Sigmoid colon (tissue), 7 donors: ENCODE measurements at regions of chr19 and their contacts with region 1.

Region 1: DNA sequence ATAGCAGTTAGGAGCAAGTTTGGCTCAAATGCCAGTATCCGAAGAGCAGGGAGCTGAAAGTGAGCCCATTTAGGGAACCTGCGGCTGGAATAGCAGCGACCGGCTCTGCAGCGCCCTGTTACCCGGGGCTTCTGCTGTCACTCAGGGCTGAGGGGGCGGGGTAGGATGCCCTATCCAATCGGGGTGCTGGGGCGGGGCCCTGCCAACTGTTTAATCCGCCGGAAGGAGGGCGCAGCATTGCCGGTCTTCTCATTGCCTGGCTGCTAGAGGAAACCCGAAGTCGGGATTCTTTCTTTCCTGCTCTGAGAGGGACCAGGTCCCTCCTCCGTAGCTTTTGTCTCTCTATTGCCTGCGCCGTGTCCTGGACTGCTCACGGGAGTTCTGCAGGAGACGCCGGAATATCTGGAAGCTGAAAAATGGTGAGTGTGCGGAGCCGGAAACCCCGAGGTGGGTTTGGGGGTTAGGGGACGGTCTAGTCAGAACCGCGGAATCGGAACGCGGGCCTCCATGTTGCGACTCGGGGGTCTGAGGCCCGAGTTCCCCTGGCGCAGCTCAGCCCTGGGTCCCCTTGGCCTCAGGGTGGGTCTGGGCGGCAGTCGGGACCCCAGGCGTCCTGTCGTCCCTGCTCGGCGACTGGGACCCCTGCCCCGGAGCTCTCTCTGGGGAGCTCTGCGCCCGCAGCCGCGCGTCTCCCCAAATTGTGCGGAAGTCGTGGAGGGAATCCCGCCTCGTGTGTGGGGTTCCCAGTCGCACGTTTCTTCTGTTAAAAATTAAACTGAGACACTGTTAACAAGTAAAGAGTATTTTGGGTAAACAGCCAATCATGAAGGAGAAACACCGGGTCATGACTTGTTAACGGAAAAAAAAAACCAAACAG is 22.8 kb downstream of the ZNF763 start:
- DNase-seq: peak; percentile 98
- H3K4me3 ChIP-seq: peak overlapping the region; percentile 66 to 85 (median 76)
- H3K27ac ChIP-seq: peak overlapping the region; percentile 92 to 95 (median 94)
- H3K4me1 ChIP-seq: peaks cover 0 to 15% (median 3%) of the 10 kb centered on the region in 4 donors
- H3K27me3 ChIP-seq: no peaks in the 10 kb centered on the region
- CTCF ChIP-seq: no peak
- EP300 ChIP-seq: no peak
- POLR2A ChIP-seq: peak; percentile 91 to 94

Region 2: DNA sequence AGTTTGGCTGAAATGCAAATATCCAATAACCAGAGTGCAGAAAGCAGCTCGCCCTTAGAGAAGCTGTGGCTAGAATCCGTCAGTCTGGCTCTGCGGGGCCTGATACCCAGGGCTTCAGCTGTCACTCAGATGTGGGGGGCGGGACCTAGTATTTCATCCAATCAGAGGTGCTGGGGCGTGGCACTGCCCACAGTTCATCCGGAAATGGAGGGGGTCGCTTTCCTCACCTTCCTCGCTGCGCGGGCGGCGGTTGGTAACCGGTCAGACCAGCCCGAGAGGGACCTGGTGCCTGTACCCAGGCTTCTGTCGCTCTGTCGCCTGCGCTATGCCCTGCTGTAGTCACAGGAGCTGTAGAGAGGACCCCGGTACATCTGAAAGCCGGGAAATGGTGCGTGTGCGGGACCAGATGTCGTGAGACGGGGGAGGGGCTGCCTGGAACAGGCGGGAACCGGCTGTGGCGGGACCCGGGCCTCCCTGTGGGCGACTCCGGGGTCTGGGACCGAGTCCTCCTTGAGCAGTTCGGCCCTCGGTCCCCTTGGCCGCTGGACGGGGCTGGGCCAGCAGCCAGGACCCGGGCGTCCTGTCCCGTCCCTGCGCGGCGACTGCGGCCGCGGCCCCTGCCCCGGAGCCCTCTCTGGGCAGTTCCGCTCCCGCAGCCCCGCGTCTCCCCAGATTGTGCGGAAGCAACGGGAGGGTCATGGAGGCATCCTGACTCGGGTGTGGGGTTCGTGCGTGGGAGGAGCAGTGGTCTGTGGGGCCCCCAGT is 62.6 kb before region 1 on chr19 and contains the start of gene ZNF700:
- intact Hi-C with region 1: loop called (anchors 1 kb)
- DNase-seq: peak; percentile 97
- H3K4me3 ChIP-seq: peak within 1 kb of the TSS; percentile 64 to 96 (median 81)
- H3K27ac ChIP-seq: peak within 1 kb of the TSS; percentile 84 to 97 (median 94)
- H3K4me1 ChIP-seq: peaks cover 0 to 27% (median 20%) of the 10 kb centered on the region in 4 donors
- H3K27me3 ChIP-seq: no peaks in the 10 kb centered on the region
- CTCF ChIP-seq: no peak
- EP300 ChIP-seq: no peak
- POLR2A ChIP-seq: peak; percentile 36 to 87
- total RNA-seq, gene ZNF700: 13.7 to 19.7 (median 15.0) TPM